ENCODE measurements at regions of chr10 and their contacts with region 1.

Region 1: GRCh38 chr10:67697724-67698131 is 1.7 kb upstream of the CTNNA3 start:
- DNase-seq: no peak

Region 2: GRCh38 chr10:67666416-67667034 is 31.2 kb before region 1 on chr10:
- intact Hi-C with region 1: loop called (anchors 2 kb)
- DNase-seq: no peak

Region 3: DNA sequence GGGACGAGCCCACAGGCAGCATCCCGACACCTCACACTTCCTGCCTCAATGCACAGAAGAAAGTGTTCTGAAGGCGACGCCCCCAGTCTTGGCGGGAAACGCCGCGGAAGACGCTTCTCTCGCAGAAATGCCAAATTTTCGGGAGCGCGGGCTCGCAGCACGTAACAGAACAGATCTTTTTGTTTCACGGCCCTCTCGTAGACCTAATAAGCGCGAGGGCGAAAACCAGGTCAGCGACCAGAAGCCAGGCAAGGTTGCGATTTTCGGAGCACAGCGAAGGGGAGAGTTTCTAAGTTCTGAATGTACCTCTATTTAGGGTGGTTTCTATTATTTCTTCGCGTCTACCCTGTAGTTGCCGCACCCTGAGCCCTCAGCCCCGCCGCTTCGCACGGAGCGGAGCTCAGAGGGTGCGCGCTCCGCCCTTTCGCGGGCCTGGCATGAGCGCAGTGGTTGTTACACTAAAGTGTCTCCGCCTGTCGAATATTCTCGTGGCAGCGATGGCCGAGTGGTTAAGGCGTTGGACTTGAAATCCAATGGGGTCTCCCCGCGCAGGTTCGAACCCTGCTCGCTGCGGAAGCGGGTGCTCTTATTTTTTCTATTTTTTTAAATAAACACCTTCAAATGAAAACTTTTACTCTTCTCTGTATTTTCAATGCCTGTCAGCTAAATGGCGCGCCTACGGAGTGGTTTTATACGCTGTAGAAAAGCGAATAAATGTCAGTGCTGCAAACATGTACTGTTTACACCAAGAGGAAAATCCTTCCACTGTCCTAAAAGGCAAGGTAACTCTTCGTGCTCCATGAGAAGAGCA is 66.5 kb after region 1 on chr10:
- intact Hi-C with region 1: loop called (anchors 5 kb)
- DNase-seq: peak; percentile 94

Region 4: GRCh38 chr10:67790534-67791408 is 93.0 kb after region 1 on chr10:
- intact Hi-C with region 1: no loop called
- DNase-seq: no peak

Region 5: GRCh38 chr10:67861750-67862460 is 164.2 kb after region 1 on chr10:
- intact Hi-C with region 1: no loop called
- DNase-seq: no peak